A673 (cell line): ENCODE measurements at regions of chr10 and their contacts with region 1.

Region 1: DNA sequence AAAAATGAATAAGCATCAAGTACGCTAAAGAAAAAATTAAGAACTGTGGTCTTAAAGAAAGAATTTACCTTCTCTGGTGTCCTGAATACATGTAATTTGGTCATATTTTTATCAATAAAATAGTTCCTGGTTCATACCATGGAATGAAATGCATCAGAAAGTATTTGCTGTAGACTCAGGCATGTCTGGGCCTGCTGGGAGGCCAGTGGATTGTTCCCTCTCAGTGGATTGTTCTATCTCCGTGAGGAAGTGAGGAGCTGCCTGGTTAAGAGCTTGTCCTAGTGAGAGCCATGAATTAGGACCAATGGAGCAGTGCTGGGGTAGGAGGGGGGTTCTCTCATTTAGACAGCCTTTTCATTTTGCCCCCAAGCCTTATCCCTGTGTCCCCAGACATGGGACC is 211.7 kb upstream of the HABP2 start:
- DNase-seq: no peak
- H3K4me3 ChIP-seq: no peak overlapping the region
- H3K27ac ChIP-seq: no peak overlapping the region
- H3K4me1 ChIP-seq: no peaks in the 10 kb centered on the region
- H3K27me3 ChIP-seq: no peaks in the 10 kb centered on the region
- CTCF ChIP-seq: no peak

Region 2: DNA sequence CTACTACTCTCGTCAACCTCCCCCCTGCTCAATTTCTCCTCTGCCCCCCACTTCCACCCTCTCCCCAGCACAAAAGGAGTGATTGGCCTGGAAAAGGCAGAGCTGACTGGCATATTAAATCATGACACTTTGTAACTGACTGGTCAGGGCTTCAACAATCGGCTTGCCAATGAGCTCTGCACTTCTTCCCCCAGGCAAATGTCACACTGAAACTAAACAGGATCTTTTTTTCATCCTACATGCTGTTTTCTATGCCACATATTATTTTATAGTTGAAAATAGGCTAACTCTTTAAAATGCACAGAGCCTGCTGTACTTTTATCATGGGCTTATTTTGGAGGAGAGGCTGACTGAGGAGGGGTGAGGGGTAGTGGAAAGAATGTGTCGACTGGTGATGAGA is 95.9 kb before region 1 on chr10:
- CTCF ChIA-PET with region 1: no interaction called
- POLR2A ChIA-PET with region 1: interaction called, 19 read pairs
- intact Hi-C with region 1: no loop called
- DNase-seq: no peak
- H3K4me3 ChIP-seq: no peak overlapping the region
- H3K27ac ChIP-seq: no peak overlapping the region
- H3K4me1 ChIP-seq: no peaks in the 10 kb centered on the region
- H3K27me3 ChIP-seq: peaks cover under 1% of the 10 kb centered on the region
- CTCF ChIP-seq: no peak